ENCODE measurements at regions of chr3 and their contacts with region 1.

Region 1: GRCh38 chr3:50503504-50504342 is at the start of gene CACNA2D2:
- DNase-seq: peak; percentile 57
- ATAC-seq: peak; percentile 87
- H3K4me3 Mint-ChIP-seq: peak within 1 kb of the TSS; percentile 69
- H3K27ac Mint-ChIP-seq: no peak within 1 kb of the TSS
- H3K4me1 Mint-ChIP-seq: peaks cover 10% of the 10 kb centered on the region
- H3K27me3 Mint-ChIP-seq: peaks cover 29% of the 10 kb centered on the region
- CTCF ChIP-seq: no peak
- total RNA-seq, gene CACNA2D2: 0.34 and 0.53 TPM in 2 replicates

Region 2: DNA sequence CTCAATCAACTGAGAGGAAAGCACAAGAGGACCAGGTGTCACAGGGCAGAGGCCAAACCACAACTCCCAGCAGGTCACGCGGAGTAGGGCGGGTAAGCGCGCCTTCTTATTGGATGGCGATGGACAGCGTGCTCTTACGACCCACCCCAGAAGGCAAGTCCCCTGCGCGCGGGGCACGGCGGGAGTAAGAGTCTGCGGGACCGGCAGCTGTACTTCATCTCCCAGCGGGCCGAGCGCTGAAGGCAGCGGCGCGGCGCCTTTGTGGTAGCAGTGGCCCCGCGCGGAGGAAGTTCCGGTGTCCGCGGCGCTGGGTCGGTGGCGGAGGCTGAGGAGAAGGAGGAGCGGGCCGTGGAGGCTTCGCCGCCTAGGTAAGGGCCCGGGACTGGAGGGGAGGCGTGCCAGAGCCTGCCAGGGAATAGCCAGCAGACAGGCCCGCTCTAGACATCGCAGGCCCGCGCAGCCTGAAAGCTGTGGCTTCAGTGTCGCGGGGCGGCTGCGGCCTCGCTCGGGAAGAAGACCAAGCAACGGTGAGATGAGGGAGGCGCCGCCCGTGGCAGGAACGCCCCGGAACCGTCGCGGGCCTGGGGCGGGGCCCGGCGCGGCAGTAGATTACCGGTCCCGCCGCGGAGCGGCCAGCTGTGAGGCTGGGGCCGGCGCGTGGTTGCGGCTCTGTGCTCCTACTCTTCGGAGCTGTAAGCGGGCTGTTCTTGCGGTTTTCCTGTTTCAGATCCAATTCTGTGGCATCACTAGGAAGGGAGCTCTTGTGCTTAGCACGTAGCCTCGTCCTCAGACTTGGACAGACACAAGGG is 563.7 kb before region 1 on chr3 and contains the start of gene RBM6:
- CTCF ChIA-PET with region 1: no interaction called
- POLR2A ChIA-PET with region 1: no interaction called
- intact Hi-C with region 1: no loop called
- DNase-seq: peak; percentile 89
- ATAC-seq: peak; percentile 93
- H3K4me3 Mint-ChIP-seq: peak within 1 kb of the TSS; percentile 98
- H3K27ac Mint-ChIP-seq: peak within 1 kb of the TSS; percentile 97
- H3K4me1 Mint-ChIP-seq: peaks cover 43% of the 10 kb centered on the region
- H3K27me3 Mint-ChIP-seq: no peaks in the 10 kb centered on the region
- CTCF ChIP-seq: no peak
- total RNA-seq, gene RBM6: 160 and 172 TPM in 2 replicates

Region 3: DNA sequence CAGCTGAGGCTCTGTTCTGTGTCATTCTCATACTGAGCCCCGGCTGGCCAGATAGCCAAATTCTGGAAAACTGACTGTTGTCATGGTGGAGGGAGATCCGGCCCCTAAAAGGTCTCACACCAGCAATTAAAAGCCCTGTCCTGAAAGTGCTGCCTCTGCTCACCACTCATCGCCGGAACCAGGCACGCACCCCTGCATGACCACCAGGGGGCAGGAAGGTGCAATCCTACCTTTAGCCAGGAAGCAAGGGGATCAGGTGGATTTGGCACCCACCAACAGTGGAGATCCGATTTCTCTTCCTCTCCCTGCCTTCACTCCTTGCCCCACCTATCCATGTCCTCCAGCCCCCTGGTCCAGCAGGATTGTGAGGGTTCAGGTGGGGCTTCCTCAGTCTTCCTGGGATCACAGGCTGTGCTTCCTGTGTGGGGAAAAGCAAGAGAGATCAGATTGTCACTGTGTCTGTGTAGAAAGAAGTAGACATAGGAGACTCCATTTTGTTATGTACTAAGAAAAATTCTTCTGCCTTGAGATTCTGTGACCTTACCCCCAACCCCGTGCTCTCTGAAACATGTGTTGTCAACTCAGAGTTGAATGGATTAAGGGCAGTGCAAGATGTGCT is 15.9 kb after region 1 on chr3:
- CTCF ChIA-PET with region 1: no interaction called
- POLR2A ChIA-PET with region 1: no interaction called
- intact Hi-C with region 1: loop called (anchors 1 kb)
- DNase-seq: peak; percentile 52
- ATAC-seq: peak; percentile 38
- H3K4me3 Mint-ChIP-seq: no peak overlapping the region
- H3K27ac Mint-ChIP-seq: no peak overlapping the region
- H3K4me1 Mint-ChIP-seq: peaks cover 27% of the 10 kb centered on the region
- H3K27me3 Mint-ChIP-seq: peaks cover 3% of the 10 kb centered on the region
- CTCF ChIP-seq: no peak

Region 4: DNA sequence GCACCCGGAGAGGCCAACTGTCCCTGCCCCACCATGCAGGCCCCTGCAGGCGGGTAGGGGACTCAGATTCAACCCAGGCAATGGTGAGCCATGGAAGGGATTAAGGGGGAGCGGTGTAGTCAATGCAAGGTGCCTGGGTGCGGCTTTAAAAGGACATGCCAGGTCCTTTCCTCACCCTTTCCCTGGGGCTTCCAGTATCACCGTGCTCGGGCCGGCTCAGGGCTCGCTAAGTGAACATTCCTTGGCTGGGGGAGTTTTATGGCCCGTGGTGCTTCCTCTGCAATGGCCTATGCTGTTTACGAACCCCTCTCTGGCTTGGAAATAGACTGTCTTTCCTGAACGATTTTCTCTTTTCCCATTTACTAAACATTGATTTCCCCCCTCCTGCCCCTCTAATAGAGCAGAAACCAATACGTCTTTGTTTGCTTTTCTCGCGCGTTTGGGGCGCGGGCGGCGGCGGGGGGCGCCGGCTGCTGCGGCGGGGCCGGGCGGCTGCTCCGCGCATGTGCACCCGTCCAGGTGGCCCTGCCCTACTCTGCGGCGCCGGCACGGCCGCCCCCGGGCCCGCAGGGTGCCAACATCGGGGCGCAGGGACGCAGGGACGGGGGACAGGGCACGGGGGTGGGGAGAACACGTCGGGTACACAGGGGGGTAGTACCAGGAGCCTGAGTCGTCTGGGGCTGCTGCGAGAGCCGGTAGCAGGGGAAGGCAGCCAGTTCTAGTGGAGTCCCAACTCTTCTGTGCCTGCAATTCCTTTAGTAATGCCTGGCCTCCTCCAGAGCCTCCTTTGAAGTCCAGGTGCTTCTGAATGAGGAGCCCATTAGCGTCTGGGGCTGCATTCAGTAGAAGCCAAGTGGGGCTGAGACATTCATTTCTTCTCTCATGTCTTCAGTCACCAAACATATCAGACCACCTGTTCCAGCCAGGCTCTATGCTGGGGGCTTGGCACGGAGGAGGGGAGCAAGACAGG is 26.6 kb after region 1 on chr3:
- CTCF ChIA-PET with region 1: no interaction called
- POLR2A ChIA-PET with region 1: no interaction called
- intact Hi-C with region 1: no loop called
- DNase-seq: no peak
- ATAC-seq: no peak
- H3K4me3 Mint-ChIP-seq: no peak overlapping the region
- H3K27ac Mint-ChIP-seq: no peak overlapping the region
- H3K4me1 Mint-ChIP-seq: no peaks in the 10 kb centered on the region
- H3K27me3 Mint-ChIP-seq: peaks cover 43% of the 10 kb centered on the region
- CTCF ChIP-seq: no peak

Measured in activated B cell treated with CpG ODN at 0.5 μM for 24 hours (primary cell).